Right cardiac atrium (tissue), 5 donors: ENCODE measurements at regions of chr11 and their contacts with region 1.

Region 1: GRCh38 chr11:124673333-124674167 is at the starts of genes SIAE and SPA17:
- DNase-seq: peak; percentile 95 to 98 (median 98)
- ATAC-seq: peak; percentile 98 to 99
- H3K4me3 ChIP-seq: peak within 1 kb of the TSS; percentile 64
- H3K27ac ChIP-seq: peak within 1 kb of the TSS; percentile 92
- H3K4me1 ChIP-seq: peaks cover 4% of the 10 kb centered on the region
- H3K27me3 ChIP-seq: no peaks in the 10 kb centered on the region
- total RNA-seq, gene SIAE: 43.4 to 72.6 (median 53.9) TPM
- total RNA-seq, gene SPA17: 2.3 to 4.0 (median 3.0) TPM

Region 2: GRCh38 chr11:124763156-124763947 is 89.8 kb after region 1 on chr11:
- intact Hi-C with region 1: loop called (anchors 2 to 5 kb)
- DNase-seq: peak; percentile 87 to 96 (median 94)
- ATAC-seq: peak; percentile 3 to 4
- H3K4me3 ChIP-seq: peak overlapping the region; percentile 60
- H3K27ac ChIP-seq: peak overlapping the region; percentile 77
- H3K4me1 ChIP-seq: peaks cover 3% of the 10 kb centered on the region
- H3K27me3 ChIP-seq: no peaks in the 10 kb centered on the region